HEK293 (cell line): ENCODE measurements at regions of chr5 and their contacts with region 1.

Region 1: DNA sequence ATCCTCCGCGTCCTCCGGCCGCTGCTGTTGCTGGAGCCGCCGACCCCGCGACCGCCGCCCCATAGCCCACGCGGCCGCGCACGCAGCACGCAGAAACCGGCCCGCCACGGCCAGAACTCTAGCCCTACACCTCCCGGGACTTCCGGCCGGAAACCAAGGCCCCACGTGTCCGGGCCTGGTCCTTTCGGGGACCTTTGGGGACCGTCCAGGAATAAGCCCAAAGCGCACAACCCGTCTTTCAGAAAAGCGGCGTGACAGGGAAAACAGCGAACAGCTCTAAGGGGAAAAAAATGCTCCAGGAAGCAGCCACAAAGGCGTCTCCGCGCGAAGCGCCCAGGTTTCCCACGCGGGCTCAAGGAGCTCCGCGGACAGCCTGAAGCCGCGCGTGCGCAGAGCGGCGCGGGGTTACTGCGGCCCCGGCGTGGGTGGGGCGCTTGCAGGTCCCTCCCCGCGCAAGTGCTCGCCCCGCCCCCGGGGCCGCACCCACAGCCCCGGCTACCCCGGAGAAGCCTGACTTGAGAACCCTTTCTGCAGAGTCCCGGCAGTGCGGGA is at the starts of genes NSUN2 and SRD5A1:
- H3K4me3 ChIP-seq: peak within 1 kb of the TSS; percentile 86
- H3K27ac ChIP-seq: peak within 1 kb of the TSS; percentile 87
- H3K4me1 ChIP-seq: peaks cover 7% of the 10 kb centered on the region
- CTCF ChIP-seq: no peak

Region 2: DNA sequence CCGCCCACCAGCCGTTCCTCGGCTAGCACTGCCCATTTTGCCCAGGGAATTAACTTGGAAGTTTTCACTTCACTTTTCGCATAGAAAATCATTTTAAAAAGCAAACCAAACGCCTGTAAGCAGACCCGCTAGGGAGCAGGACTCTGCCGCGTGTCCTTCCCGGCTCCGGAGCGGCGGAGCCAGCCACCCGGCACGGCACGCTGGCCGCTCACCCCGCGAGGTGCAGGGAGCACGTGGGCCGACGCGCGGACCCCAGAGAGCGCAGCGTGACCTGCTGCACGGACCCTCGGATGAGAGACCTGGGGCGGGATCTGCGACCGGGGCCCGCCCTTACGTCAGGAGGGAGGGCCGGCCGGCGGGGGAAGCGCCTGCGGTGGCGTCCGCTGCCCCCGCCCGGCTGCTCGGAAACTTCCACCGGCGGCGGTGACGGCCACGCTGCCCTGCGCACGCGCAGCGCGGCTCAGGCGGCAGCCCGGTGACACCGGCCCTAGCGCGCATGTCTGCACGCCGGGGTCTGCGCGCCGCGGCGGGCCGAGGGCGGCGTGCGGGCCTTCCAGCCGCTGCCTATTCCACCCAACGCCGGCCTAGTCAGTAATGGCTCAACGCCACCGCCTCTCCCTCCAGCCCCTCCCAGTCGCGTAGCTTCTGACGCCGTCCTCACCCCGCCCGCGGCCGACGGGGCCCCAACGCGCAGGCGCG is 79.7 kb after region 1 on chr5:
- CTCF ChIA-PET with region 1: no interaction called
- POLR2A ChIA-PET with region 1: interaction called, 13 read pairs
- H3K4me3 ChIP-seq: peak overlapping the region; percentile 72
- H3K27ac ChIP-seq: peak overlapping the region; percentile 94
- H3K4me1 ChIP-seq: peaks cover 20% of the 10 kb centered on the region
- CTCF ChIP-seq: no peak

Region 3: GRCh38 chr5:6745706-6746222 is 112.8 kb after region 1 on chr5:
- CTCF ChIA-PET with region 1: interaction called, 15 read pairs
- POLR2A ChIA-PET with region 1: interaction called, 4 read pairs
- H3K4me3 ChIP-seq: no peak overlapping the region
- H3K27ac ChIP-seq: no peak overlapping the region
- H3K4me1 ChIP-seq: no peaks in the 10 kb centered on the region
- CTCF ChIP-seq: peak; percentile 48; the same call in 1 of the 2 replicates